ENCODE measurements at regions of chr1 and their contacts with region 1.

Region 1: GRCh38 chr1:167687919-167688519 is 33.8 kb upstream of the MPZL1 start:
- DNase-seq: peak in 1 of 2 donors; percentile 71
- ATAC-seq: peak; percentile 77
- H3K4me3 ChIP-seq: no peak overlapping the region
- H3K27ac ChIP-seq: no peak overlapping the region
- H3K4me1 ChIP-seq: no peaks in the 10 kb centered on the region
- H3K27me3 ChIP-seq: no peaks in the 10 kb centered on the region

Region 2: GRCh38 chr1:167499664-167500101 is 188.3 kb before region 1 on chr1:
- intact Hi-C with region 1: no loop called
- DNase-seq: no peak
- ATAC-seq: no peak
- H3K4me3 ChIP-seq: no peak overlapping the region
- H3K27ac ChIP-seq: no peak overlapping the region
- H3K4me1 ChIP-seq: no peaks in the 10 kb centered on the region
- H3K27me3 ChIP-seq: no peaks in the 10 kb centered on the region

Region 3: DNA sequence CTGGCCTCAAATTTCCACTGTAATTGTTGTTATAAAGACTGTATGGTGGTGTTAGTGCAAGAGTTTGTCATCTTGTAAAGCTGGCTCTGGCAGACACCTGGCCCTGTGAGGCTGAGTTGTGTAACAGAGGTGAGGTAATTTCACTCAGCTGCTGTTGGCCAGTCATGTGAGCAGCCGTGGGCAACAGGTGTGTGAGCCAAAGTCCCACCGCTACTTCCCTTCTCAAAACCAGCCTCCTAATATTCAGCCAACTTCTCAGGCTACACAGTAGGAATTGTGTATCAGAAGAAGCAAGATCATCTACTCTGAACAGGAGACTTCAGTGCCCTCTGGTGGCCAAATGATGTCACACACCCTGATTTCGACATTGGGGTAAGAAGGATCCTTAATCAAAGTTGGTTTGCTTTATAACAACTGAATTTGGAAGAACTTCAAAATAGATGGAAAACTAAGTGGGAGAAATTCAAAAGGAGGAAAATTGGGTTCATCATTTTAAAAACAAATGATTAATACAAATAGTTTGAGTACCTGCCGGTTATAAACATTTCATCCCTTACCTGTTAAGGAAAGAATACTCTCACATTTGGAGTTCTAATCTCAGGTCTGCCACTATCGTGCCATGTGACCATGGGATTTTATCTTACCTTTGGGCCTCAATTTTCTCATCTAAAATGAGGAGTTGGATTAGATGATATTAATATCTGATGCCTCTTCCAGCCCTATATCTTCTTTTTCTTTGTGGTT is 131.9 kb before region 1 on chr1:
- intact Hi-C with region 1: loop called (anchors 5 kb)
- DNase-seq: peak; percentile 81 to 84
- ATAC-seq: peak; percentile 73
- H3K4me3 ChIP-seq: no peak overlapping the region
- H3K27ac ChIP-seq: no peak overlapping the region
- H3K4me1 ChIP-seq: peaks cover 0 to 4% of the 10 kb centered on the region in 2 donors
- H3K27me3 ChIP-seq: no peaks in the 10 kb centered on the region

Region 4: GRCh38 chr1:167599957-167600581 is 88.0 kb before region 1 on chr1:
- intact Hi-C with region 1: loop called (anchors 1 kb)
- DNase-seq: peak in 1 of 2 donors; percentile 59
- ATAC-seq: peak; percentile 83
- H3K4me3 ChIP-seq: no peak overlapping the region
- H3K27ac ChIP-seq: no peak overlapping the region
- H3K4me1 ChIP-seq: no peaks in the 10 kb centered on the region
- H3K27me3 ChIP-seq: no peaks in the 10 kb centered on the region

Region 5: GRCh38 chr1:167752219-167752985 is 64.4 kb after region 1 on chr1:
- intact Hi-C with region 1: no loop called
- DNase-seq: no peak
- ATAC-seq: no peak
- H3K4me3 ChIP-seq: no peak overlapping the region
- H3K27ac ChIP-seq: no peak overlapping the region
- H3K4me1 ChIP-seq: peaks cover 2 to 3% of the 10 kb centered on the region in 2 donors
- H3K27me3 ChIP-seq: no peaks in the 10 kb centered on the region